ENCODE measurements at regions of chr4 and their contacts with region 1.

Region 1: GRCh38 chr4:4488405-4489404 is 53.1 kb downstream of the STX18 start:
- DNase-seq: peak; percentile 62
- H3K4me3 ChIP-seq: no peak overlapping the region
- H3K27ac ChIP-seq: no peak overlapping the region
- H3K4me1 ChIP-seq: peaks cover 0 to 16% of the 10 kb centered on the region in 2 experiments; a peak in 2 of 4 replicates
- H3K27me3 ChIP-seq: no peaks in the 10 kb centered on the region
- CTCF ChIP-seq: peak; percentile 97
- EP300 ChIP-seq: no peak
- RAD21 ChIP-seq: peak; percentile 93

Region 2: DNA sequence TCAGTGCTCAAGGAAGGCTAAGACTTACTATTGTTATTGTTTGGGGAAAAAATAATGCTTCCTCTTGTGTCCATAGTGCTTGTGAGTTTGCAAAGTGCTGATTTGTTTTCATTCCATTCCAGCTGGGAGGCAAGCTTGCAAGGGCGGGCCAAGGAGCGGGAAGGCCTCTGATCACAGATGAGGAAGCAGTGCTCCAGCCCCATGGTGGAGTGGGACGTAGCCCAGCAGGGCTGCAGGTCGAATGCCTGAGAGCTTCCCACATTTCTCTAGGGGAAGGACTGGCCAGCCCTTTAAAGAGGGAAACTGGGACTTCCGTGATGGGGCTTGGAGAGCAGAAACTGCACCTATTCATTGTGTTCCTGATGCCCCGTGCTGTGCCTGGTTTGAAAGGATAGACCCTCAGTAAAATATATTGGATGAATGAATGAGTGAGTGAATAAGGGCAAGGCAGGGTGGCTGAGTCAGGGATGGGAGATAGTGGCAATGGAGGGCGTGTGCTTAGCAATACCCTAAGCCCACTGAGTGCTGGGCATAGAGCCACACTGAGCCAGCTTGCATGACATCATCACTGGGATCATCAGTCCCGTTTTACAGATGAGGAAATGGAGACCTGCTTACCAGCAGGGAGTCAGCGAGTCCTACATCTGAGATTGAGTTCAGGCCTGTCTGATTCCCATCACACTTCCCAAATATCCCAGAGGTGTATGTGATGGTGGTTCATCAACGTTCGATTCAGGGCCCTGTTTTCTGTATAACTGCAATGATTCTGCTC is 119.7 kb before region 1 on chr4:
- CTCF ChIA-PET with region 1: no interaction called
- POLR2A ChIA-PET with region 1: no interaction called
- DNase-seq: no peak
- H3K4me3 ChIP-seq: no peak overlapping the region
- H3K27ac ChIP-seq: no peak overlapping the region
- H3K4me1 ChIP-seq: no peaks in the 10 kb centered on the region
- H3K27me3 ChIP-seq: no peaks in the 10 kb centered on the region
- CTCF ChIP-seq: no peak
- EP300 ChIP-seq: no peak
- RAD21 ChIP-seq: no peak

Region 3: DNA sequence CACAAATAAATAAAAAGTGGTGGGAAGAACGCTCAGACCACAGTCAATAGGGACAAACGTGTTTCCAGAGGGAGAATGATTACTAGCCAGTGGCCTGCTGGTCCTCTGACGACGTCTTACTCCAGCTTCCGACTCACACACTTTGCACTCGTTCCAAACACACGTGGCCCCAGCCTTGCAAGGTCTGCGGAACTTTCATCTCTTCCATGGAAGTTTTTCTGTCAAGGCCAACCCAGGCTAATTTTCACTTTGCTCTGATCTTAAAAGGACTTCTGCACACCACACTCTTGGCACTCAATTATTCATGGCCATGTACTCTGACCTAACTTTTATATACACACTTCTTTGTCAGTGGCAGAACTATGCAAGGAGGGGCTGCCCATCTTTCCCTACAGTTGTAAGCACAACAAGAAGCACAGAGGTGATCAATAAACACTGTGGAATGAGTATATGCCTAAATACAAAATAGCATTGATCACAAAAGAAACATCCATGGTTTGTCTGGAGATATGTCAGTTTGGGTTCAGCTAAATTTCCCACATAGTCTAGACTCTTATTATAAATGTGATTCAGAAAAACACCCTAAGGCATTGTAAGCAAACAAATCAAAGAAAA is 16.3 kb before region 1 on chr4:
- CTCF ChIA-PET with region 1: interaction called, 37 read pairs
- POLR2A ChIA-PET with region 1: no interaction called
- DNase-seq: no peak
- H3K4me3 ChIP-seq: no peak overlapping the region
- H3K27ac ChIP-seq: no peak overlapping the region
- H3K4me1 ChIP-seq: peaks cover 0 to 12% of the 10 kb centered on the region in 2 experiments; a peak in 2 of 4 replicates
- H3K27me3 ChIP-seq: no peaks in the 10 kb centered on the region
- CTCF ChIP-seq: no peak
- EP300 ChIP-seq: no peak
- RAD21 ChIP-seq: no peak

Region 4: GRCh38 chr4:4502694-4503311 is 14.1 kb after region 1 on chr4:
- CTCF ChIA-PET with region 1: interaction called, 25 read pairs
- POLR2A ChIA-PET with region 1: no interaction called
- DNase-seq: no peak
- H3K4me3 ChIP-seq: no peak overlapping the region
- H3K27ac ChIP-seq: no peak overlapping the region
- H3K4me1 ChIP-seq: peaks cover 0 to 9% of the 10 kb centered on the region in 2 experiments; a peak in 2 of 4 replicates
- H3K27me3 ChIP-seq: no peaks in the 10 kb centered on the region
- CTCF ChIP-seq: no peak
- EP300 ChIP-seq: no peak
- RAD21 ChIP-seq: no peak

Region 5: GRCh38 chr4:4880492-4880891 is 391.8 kb after region 1 on chr4:
- CTCF ChIA-PET with region 1: interaction called, 25 read pairs
- POLR2A ChIA-PET with region 1: no interaction called
- DNase-seq: no peak
- H3K4me3 ChIP-seq: no peak overlapping the region
- H3K27ac ChIP-seq: no peak overlapping the region
- H3K4me1 ChIP-seq: no peaks in the 10 kb centered on the region
- H3K27me3 ChIP-seq: peaks cover 12% of the 10 kb centered on the region; the same call in 1 of the 2 replicates
- CTCF ChIP-seq: peak; percentile 58
- EP300 ChIP-seq: no peak
- RAD21 ChIP-seq: peak; percentile 64

Measured in SK-N-SH (cell line).